GM10248 (cell line): ENCODE measurements at regions of chr11 and their contacts with region 1.

Region 1: GRCh38 chr11:36249246-36249645 is 40.0 kb downstream of the COMMD9 start:
- DNase-seq: no peak
- CTCF ChIP-seq: no peak

Region 2: GRCh38 chr11:36265793-36266628 is 16.8 kb after region 1 on chr11:
- CTCF ChIA-PET with region 1: interaction called, 27 read pairs
- POLR2A ChIA-PET with region 1: no interaction called
- DNase-seq: peak; percentile 73
- CTCF ChIP-seq: peak; percentile 86